HAP-1 (cell line): ENCODE measurements at regions of chr3 and their contacts with region 1.

Region 1: GRCh38 chr3:43503067-43503728 is 118.6 kb downstream of the ANO10 start:
- DNase-seq: peak in 1 of 2 experiments; percentile 63
- H3K4me3 ChIP-seq: no peak overlapping the region
- H3K4me1 ChIP-seq: no peaks in the 10 kb centered on the region; the same call in 1 of the 2 replicates
- H3K27me3 ChIP-seq: no peaks in the 10 kb centered on the region

Region 2: DNA sequence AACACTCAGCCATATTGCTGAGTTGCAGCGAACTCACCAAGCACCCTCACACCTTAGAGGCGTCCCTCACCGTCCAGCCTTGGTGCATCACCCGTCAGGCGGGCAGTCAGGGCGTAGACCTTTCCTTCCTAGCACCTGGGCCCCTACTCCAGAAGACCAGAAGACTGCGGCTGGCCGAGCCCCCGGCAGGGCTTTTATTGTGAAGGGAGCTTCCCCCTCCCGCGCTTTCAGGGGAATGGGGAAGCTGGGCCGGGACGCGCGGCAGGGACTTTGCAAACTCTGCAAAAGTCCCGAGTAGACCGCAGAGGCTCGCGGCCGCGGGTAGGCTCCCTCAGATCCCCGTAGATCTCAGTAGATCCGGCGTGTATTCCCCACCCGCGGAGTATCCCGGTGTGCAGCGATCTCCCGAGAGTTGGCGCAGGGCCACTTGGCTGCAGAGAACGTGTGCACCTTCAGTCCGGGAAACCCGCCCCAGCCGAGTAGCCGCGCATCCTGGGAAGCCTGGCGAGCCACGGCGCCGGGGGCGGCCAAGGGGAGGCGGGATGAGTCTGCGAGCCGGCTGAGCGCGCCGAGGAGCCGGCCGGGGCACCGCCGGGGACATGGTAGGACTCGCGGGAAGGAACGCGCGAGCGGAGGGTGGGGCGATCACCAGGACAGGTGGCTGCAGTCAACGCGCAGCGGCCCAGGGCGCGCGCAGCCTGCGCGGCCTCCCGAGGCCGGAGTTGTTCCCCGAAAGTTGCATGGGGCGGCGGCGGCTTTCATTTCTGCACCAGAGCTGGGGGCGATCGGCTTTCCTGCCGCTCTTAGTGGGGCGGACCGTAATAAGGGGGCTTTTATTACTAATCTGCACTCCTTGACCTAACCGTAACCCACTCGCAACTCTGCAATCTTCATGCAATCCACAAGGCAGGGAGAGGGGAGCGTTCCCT is 523.9 kb before region 1 on chr3 and contains the start of gene GASK1A:
- in situ Hi-C with region 1: loop called (anchors 25 kb)
- DNase-seq: peak in 1 of 2 experiments; percentile 48
- H3K4me3 ChIP-seq: peak within 1 kb of the TSS; percentile 34
- H3K4me1 ChIP-seq: peaks cover 2% of the 10 kb centered on the region; the same call in 1 of the 2 replicates
- H3K27me3 ChIP-seq: peaks cover 46% of the 10 kb centered on the region

Region 3: DNA sequence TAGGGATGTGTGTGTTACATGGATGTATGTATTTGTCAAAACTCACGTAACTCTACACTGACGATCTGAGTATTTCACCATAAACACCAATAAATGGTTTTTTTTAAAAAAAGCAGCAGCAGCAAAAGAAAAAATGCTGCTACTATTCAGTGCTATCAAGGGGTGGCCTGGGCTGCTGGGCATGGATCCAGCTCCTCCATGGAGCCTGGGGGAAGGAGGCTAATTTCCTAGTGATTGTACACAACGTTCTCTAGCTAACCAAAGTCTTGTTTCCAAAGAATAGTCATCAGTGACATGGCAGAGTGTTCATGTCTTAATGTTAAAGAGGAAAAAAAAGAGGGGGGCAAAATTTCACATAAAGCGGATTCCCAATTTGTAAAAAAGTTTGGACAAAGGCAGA is 426.3 kb before region 1 on chr3:
- in situ Hi-C with region 1: no loop called
- DNase-seq: no peak
- H3K4me3 ChIP-seq: no peak overlapping the region
- H3K4me1 ChIP-seq: no peaks in the 10 kb centered on the region
- H3K27me3 ChIP-seq: no peaks in the 10 kb centered on the region